AG04449 (cell line): ENCODE measurements at regions of chr19 and their contacts with region 1.

Region 1: DNA sequence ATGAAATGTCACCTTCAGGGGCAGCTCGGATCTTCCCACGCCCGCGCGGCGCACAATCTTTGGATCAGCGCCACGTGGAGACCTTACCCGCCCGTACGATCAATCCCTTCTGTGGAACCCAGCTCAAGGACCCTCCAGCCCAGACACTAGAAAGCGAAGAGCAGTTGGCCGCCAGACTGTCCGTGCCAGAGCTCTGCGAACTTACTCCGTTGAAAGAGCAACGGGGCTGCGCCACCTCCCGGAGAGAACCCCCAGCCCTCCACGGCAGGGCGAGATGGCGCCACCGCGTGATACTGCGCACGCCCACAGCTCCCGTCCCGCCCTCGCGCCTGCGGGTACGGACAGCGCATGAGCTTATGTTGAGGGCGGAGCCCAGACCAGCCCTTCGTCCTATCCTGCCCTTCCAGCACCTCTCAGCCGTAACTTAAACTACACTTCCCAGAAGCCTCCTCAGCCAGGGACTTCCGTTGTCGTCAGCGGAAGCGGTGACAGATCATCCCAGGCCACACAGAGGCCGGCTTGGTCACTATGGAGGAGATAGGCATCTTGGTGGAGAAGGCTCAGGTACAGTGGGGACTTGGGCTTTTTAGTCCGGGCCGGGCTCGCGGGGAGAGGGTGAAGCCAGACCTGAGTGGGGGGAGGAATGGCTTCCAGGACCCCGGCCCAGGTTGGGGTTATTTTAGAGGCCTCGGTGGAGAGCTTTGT is at the start of gene PSMC4:
- DNase-seq: peak; percentile 96
- H3K4me3 ChIP-seq: peak within 1 kb of the TSS; percentile 96
- CTCF ChIP-seq: peak; percentile 86

Region 2: GRCh38 chr19:39916851-39917396 is 53.9 kb before region 1 on chr19:
- CTCF ChIA-PET with region 1: no interaction called
- POLR2A ChIA-PET with region 1: no interaction called
- DNase-seq: no peak
- H3K4me3 ChIP-seq: no peak overlapping the region
- CTCF ChIP-seq: no peak

Region 3: GRCh38 chr19:39986643-39987042 is 15.8 kb after region 1 on chr19:
- CTCF ChIA-PET with region 1: interaction called, 17 read pairs
- POLR2A ChIA-PET with region 1: no interaction called
- DNase-seq: no peak
- H3K4me3 ChIP-seq: no peak overlapping the region
- CTCF ChIP-seq: no peak